ENCODE measurements at regions of chr13 and their contacts with region 1.

Region 1: GRCh38 chr13:97018029-97018831 is 24.0 kb upstream of the OXGR1 start:
- DNase-seq: peak; percentile 70
- H3K4me3 ChIP-seq: no peak overlapping the region
- H3K27ac ChIP-seq: no peak overlapping the region
- H3K4me1 ChIP-seq: no peaks in the 10 kb centered on the region
- H3K27me3 ChIP-seq: peaks cover 14 to 18% of the 10 kb centered on the region in 2 experiments
- CTCF ChIP-seq: peak; percentile 71 to 78
- POLR2A ChIP-seq: no peak

Region 2: GRCh38 chr13:96958286-96958891 is 59.8 kb before region 1 on chr13:
- CTCF ChIA-PET with region 1: interaction called, 13 read pairs
- POLR2A ChIA-PET with region 1: no interaction called
- dilution Hi-C with region 1: no loop called
- intact Hi-C with region 1: no loop called
- DNase-seq: peak; percentile 38
- H3K4me3 ChIP-seq: no peak overlapping the region
- H3K27ac ChIP-seq: no peak overlapping the region
- H3K4me1 ChIP-seq: no peaks in the 10 kb centered on the region
- H3K27me3 ChIP-seq: peaks cover 5 to 9% of the 10 kb centered on the region in 2 experiments
- CTCF ChIP-seq: peak; percentile 56 to 74
- POLR2A ChIP-seq: no peak

Region 3: DNA sequence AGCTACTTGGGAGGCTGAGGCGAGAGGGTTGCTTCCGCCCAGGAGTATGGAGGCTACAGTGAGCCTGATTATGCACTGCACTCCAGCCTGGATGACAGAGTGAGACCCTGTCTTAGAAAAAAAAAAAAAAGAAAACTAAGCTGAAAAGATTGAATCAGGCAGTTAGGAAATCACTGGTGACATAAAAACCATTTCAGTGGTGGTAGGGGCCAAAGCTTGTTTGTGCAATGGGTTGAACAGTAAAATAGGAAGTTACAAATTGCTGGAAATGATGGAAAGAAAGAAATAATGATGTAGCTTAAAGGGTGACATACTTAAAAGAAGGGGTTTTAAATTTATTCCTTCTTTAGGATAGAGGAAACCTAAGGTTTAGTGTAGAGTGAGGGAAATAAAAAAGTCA is 19.1 kb before region 1 on chr13:
- CTCF ChIA-PET with region 1: interaction called, 24 read pairs
- POLR2A ChIA-PET with region 1: no interaction called
- dilution Hi-C with region 1: no loop called
- intact Hi-C with region 1: no loop called
- DNase-seq: no peak
- H3K4me3 ChIP-seq: no peak overlapping the region
- H3K27ac ChIP-seq: no peak overlapping the region
- H3K4me1 ChIP-seq: no peaks in the 10 kb centered on the region
- H3K27me3 ChIP-seq: peaks cover 31 to 76% of the 10 kb centered on the region in 2 experiments
- CTCF ChIP-seq: no peak
- POLR2A ChIP-seq: no peak

Region 4: GRCh38 chr13:97043302-97043701 is 25.1 kb after region 1 on chr13:
- CTCF ChIA-PET with region 1: interaction called, 11 read pairs
- POLR2A ChIA-PET with region 1: no interaction called
- dilution Hi-C with region 1: no loop called
- intact Hi-C with region 1: no loop called
- DNase-seq: peak; percentile 74
- H3K4me3 ChIP-seq: no peak overlapping the region
- H3K27ac ChIP-seq: peak overlapping the region; percentile 20
- H3K4me1 ChIP-seq: peaks cover 10% of the 10 kb centered on the region
- H3K27me3 ChIP-seq: no peaks in the 10 kb centered on the region
- CTCF ChIP-seq: no peak
- POLR2A ChIP-seq: no peak

Region 5: GRCh38 chr13:97367016-97367822 is 349.0 kb after region 1 on chr13:
- CTCF ChIA-PET with region 1: interaction called, 15 read pairs
- POLR2A ChIA-PET with region 1: no interaction called
- dilution Hi-C with region 1: no loop called
- intact Hi-C with region 1: no loop called
- DNase-seq: no peak
- H3K4me3 ChIP-seq: no peak overlapping the region
- H3K27ac ChIP-seq: no peak overlapping the region
- H3K4me1 ChIP-seq: peaks cover 6% of the 10 kb centered on the region
- H3K27me3 ChIP-seq: no peaks in the 10 kb centered on the region
- CTCF ChIP-seq: no peak
- POLR2A ChIP-seq: no peak

Region 6: GRCh38 chr13:97659602-97660001 is 641.4 kb after region 1 on chr13:
- CTCF ChIA-PET with region 1: interaction called, 17 read pairs
- POLR2A ChIA-PET with region 1: no interaction called
- dilution Hi-C with region 1: no loop called
- intact Hi-C with region 1: no loop called
- DNase-seq: peak; percentile 45
- H3K4me3 ChIP-seq: no peak overlapping the region
- H3K27ac ChIP-seq: no peak overlapping the region
- H3K4me1 ChIP-seq: peaks cover 54% of the 10 kb centered on the region
- H3K27me3 ChIP-seq: no peaks in the 10 kb centered on the region
- CTCF ChIP-seq: peak; percentile 30 to 41
- POLR2A ChIP-seq: no peak

Measured in endothelial cell of umbilical vein (primary cell).